Activated CD4-positive, alpha-beta memory T cell treated with anti-CD3 and anti-CD28 coated beads for 36 hours (primary cell): ENCODE measurements at regions of chr22 and their contacts with region 1.

Region 1: DNA sequence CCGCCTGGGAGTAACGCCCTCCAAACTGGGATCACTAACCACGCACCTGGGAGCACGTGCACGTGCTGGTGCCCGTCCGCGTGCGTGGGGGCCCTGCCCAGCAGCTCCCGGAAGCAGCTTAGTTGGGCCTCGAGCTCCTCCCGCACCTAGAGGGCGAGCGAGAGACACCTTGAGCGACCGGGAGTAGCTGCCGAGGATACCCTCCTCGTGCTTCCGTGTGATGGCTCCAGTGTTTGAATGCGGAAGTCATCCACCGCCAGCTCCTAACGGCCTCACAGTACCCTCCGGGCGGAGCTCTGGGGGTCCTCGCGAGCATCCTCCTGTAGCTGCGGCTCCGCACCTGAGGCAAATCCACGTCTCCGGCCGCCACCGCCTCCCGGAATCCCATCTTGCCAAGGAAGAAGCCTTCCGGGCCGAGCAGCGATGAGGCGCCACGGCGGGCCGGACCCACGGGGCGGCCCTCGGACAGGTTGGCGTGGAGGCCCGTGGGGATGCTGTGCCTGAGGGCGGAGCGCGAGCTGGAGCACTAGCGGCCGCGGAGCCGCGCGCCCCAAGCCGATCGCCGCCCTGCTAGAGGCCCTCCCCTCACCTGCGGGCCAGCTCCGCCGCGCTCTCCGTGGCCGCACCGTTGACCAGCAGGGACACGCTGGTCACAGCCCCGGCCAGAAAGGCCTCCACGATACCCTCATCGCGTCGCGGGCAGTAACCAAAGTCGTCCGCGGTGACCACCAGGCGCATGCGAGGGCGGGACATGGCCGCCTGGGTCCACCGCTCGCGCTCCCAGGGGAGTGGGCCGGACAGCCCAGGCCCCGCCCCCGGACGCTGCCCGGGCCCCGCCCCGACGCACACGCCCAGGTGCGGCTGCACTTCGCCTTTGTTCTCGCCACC is at the start of gene YDJC:
- DNase-seq: peak; percentile 96
- H3K4me3 Mint-ChIP-seq: peak within 1 kb of the TSS; percentile 89
- H3K27ac Mint-ChIP-seq: peak within 1 kb of the TSS; percentile 92
- H3K4me1 Mint-ChIP-seq: peaks cover 38% of the 10 kb centered on the region
- H3K27me3 Mint-ChIP-seq: no peaks in the 10 kb centered on the region
- total RNA-seq, gene YDJC: 45.3 to 47.1 TPM

Region 2: DNA sequence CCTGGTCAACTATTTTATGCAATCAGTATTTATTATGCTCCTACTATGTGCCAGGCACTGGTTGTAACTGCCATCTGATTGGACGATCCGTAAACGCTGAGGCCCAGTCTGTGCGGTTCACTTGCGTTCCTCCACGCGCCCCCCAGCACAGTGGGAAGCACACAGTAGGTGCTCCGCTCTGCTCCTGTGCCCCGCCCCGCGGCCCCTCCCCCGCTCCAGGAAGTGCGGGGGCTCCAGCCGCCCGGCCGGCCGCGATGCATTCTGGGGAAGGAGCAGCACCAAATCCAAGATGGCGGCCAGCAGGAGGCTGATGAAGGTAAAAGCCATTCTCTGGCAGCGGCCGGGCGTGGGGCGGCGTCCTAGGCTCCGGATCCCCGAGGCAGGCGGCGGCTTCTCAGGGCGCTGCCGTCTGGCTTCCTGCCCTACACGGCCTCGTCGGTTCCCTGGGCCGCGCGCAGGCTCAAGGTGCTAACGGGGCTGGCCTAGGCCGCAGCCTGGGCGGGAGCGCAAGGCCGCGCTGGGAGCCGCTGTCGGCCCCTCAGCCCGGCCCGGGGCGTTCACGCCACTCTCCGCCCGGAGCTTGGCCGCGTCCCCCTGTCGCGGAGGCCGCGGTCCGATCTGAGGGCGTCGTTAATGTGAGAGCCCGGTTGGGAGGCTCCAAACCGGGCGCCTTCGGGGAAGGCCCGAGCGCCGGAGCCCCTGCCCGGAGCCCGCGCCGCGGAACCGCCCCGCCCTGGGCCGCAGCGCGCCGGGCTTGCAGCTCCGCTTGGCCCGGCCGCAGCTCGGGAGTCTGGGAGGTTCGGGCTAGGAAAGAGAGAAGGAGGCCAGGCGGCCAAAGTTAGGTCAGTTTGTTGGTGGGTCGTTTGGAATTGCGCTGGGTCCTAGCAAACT is 61.8 kb before region 1 on chr22 and contains the start of gene UBE2L3:
- CTCF ChIA-PET with region 1: interaction called, 11 read pairs
- POLR2A ChIA-PET with region 1: interaction called, 12 read pairs
- intact Hi-C with region 1: loop called (anchors 2 kb)
- DNase-seq: peak; percentile 90
- H3K4me3 Mint-ChIP-seq: peak within 1 kb of the TSS; percentile 94
- H3K27ac Mint-ChIP-seq: peak within 1 kb of the TSS; percentile 94
- H3K4me1 Mint-ChIP-seq: peaks cover 43% of the 10 kb centered on the region
- H3K27me3 Mint-ChIP-seq: no peaks in the 10 kb centered on the region
- total RNA-seq, gene UBE2L3: 52.4 to 53.1 TPM

Region 3: GRCh38 chr22:21587803-21588611 is 41.5 kb before region 1 on chr22:
- CTCF ChIA-PET with region 1: interaction called, 20 read pairs
- POLR2A ChIA-PET with region 1: interaction called, 8 read pairs
- intact Hi-C with region 1: loop called (anchors 5 kb)
- DNase-seq: peak; percentile 80
- H3K4me3 Mint-ChIP-seq: no peak overlapping the region
- H3K27ac Mint-ChIP-seq: peak overlapping the region; percentile 74
- H3K4me1 Mint-ChIP-seq: peaks cover 57% of the 10 kb centered on the region
- H3K27me3 Mint-ChIP-seq: no peaks in the 10 kb centered on the region

Region 4: DNA sequence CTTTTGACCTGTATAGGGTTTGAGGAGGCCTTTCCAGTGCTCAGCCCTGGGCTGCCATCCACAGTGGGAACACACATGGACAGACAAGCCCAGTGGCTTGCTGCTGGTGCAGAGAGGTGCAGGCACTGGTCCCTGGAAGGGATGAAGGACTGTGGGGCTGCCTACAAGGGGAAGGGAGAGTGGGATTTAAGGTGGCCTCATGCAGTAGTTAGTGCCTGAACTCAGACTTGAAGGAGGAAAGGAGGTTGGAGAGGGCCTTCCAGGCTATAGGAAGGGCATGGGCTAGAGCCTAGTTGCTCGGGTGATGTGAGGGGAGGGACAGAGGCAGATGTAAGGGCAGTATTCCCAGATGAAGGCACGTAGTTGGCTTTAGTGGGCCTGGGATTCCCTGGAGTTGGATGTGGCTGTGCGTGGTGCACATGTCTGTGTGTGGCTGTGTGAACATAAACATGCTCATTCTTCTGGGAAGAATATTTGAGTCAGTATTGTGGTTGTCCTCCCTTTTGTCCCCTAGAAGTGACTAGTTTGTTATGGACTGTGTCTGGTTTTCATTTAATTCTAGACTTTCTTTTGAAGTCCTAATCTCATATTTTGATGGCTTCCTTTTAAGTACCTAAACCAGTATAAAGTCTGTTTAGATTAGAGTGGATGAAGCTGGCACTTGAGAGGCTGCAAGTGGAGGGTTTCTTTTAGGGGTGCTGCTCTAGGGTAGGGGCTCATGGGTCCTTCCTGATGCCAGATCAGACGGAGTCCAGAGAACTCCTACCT is 18.1 kb before region 1 on chr22:
- CTCF ChIA-PET with region 1: interaction called, 15 read pairs
- POLR2A ChIA-PET with region 1: no interaction called
- intact Hi-C with region 1: no loop called
- DNase-seq: no peak
- H3K4me3 Mint-ChIP-seq: no peak overlapping the region
- H3K27ac Mint-ChIP-seq: peak overlapping the region; percentile 84
- H3K4me1 Mint-ChIP-seq: peaks cover 36% of the 10 kb centered on the region
- H3K27me3 Mint-ChIP-seq: no peaks in the 10 kb centered on the region